B cell (primary cell): ENCODE measurements at regions of chr3 and their contacts with region 1.

Region 1: DNA sequence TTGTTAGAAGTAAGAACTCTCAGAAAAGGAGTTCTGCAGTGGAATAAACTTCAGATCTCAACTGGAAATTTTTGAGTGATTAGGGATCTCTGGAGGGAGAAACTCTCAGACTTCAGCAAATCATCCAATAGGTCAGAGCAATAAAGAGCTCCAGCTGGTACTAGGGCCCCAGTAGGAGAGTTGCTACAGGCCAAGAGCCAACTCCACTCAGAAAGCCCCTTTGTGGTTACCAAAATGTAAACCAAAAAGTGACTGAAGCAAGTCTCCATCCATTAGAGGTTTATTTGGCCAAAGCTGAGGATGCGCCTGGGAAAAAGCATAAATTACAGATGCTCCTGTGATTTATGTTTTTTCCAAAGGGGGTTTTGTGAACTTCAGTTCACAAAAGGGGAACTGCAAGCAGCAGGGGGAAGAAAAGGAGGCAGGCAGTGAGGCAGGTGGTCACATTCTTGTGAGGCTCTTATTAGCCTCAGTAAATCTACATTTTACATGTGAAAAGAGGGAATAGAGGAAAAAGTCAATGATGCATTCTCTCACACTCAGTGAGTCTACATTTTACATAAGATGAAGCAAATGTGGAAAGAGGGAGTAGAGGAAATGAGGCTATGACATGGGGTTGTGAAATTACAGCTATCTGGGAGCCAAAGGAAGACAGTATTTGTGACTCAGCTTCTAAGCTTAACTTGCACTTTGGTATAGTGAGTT is 92.4 kb upstream of the DAZL start:
- DNase-seq: peak; percentile 32
- ATAC-seq: peak; percentile 17
- H3K4me3 ChIP-seq: peak overlapping the region; percentile 7 to 55 (median 34)
- H3K4me3 Mint-ChIP-seq: peak overlapping the region; percentile 72
- H3K27ac ChIP-seq: peak overlapping the region; percentile 46 to 69
- H3K27ac Mint-ChIP-seq: peak overlapping the region; percentile 79
- H3K4me1 ChIP-seq: peaks cover 56 to 58% of the 10 kb centered on the region in 2 donors
- H3K4me1 Mint-ChIP-seq: peaks cover 61% of the 10 kb centered on the region
- H3K27me3 ChIP-seq: no peaks in the 10 kb centered on the region
- H3K27me3 Mint-ChIP-seq: peaks cover 2% of the 10 kb centered on the region
- CTCF ChIP-seq: no peak

Region 2: DNA sequence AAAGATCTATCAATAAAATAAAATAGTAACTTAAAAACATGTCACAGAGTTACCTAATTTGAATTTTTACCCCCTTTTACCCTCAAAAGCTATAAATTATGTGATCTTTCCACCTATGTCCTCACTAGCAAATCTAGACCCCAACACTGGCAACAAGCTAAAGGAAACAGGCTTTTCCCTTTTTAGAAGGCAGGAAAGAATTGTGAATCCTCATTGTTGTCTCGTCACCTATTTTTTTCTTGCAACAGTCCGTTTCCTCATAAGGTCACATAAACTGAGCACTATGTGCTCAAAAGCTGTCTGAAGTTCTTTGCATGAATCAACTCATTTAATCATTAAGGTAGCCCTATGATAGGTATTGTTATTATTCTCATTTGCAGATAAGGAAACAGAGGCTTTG is 57.8 kb before region 1 on chr3:
- CTCF ChIA-PET with region 1: no interaction called
- POLR2A ChIA-PET with region 1: no interaction called
- intact Hi-C with region 1: loop called (anchors 10 kb)
- DNase-seq: no peak
- ATAC-seq: no peak
- H3K4me3 ChIP-seq: no peak overlapping the region
- H3K4me3 Mint-ChIP-seq: no peak overlapping the region
- H3K27ac ChIP-seq: no peak overlapping the region
- H3K27ac Mint-ChIP-seq: no peak overlapping the region
- H3K4me1 ChIP-seq: peaks cover 5 to 7% of the 10 kb centered on the region in 2 donors
- H3K4me1 Mint-ChIP-seq: peaks cover 14% of the 10 kb centered on the region
- H3K27me3 ChIP-seq: no peaks in the 10 kb centered on the region
- H3K27me3 Mint-ChIP-seq: no peaks in the 10 kb centered on the region
- CTCF ChIP-seq: no peak

Region 3: GRCh38 chr3:16708285-16708684 is 10.7 kb after region 1 on chr3:
- CTCF ChIA-PET with region 1: no interaction called
- POLR2A ChIA-PET with region 1: no interaction called
- intact Hi-C with region 1: no loop called
- DNase-seq: no peak
- ATAC-seq: no peak
- H3K4me3 ChIP-seq: no peak overlapping the region
- H3K4me3 Mint-ChIP-seq: no peak overlapping the region
- H3K27ac ChIP-seq: no peak overlapping the region
- H3K27ac Mint-ChIP-seq: no peak overlapping the region
- H3K4me1 ChIP-seq: no peaks in the 10 kb centered on the region
- H3K4me1 Mint-ChIP-seq: peaks cover 6% of the 10 kb centered on the region
- H3K27me3 ChIP-seq: no peaks in the 10 kb centered on the region
- H3K27me3 Mint-ChIP-seq: peaks cover 18% of the 10 kb centered on the region
- CTCF ChIP-seq: no peak